Mammary epithelial cell (primary cell): ENCODE measurements at regions of chr3 and their contacts with region 1.

Region 1: GRCh38 chr3:23113455-23114171 is 89.5 kb upstream of the UBE2E2 start:
- DNase-seq: peak; percentile 91
- H3K4me3 ChIP-seq: no peak overlapping the region
- H3K27ac ChIP-seq: no peak overlapping the region
- H3K4me1 ChIP-seq: peaks cover 21% of the 10 kb centered on the region
- H3K27me3 ChIP-seq: no peaks in the 10 kb centered on the region
- CTCF ChIP-seq: no peak

Region 2: GRCh38 chr3:23095017-23095416 is 18.6 kb before region 1 on chr3:
- CTCF ChIA-PET with region 1: no interaction called
- dilution Hi-C with region 1: no loop called
- in situ Hi-C with region 1: no loop called
- intact Hi-C with region 1: loop called (anchors 1 kb)
- DNase-seq: peak; percentile 90
- H3K4me3 ChIP-seq: no peak overlapping the region
- H3K27ac ChIP-seq: no peak overlapping the region
- H3K4me1 ChIP-seq: no peaks in the 10 kb centered on the region
- H3K27me3 ChIP-seq: peaks cover 2% of the 10 kb centered on the region
- CTCF ChIP-seq: no peak